ENCODE measurements at regions of chr3 and their contacts with region 1.

Region 1: DNA sequence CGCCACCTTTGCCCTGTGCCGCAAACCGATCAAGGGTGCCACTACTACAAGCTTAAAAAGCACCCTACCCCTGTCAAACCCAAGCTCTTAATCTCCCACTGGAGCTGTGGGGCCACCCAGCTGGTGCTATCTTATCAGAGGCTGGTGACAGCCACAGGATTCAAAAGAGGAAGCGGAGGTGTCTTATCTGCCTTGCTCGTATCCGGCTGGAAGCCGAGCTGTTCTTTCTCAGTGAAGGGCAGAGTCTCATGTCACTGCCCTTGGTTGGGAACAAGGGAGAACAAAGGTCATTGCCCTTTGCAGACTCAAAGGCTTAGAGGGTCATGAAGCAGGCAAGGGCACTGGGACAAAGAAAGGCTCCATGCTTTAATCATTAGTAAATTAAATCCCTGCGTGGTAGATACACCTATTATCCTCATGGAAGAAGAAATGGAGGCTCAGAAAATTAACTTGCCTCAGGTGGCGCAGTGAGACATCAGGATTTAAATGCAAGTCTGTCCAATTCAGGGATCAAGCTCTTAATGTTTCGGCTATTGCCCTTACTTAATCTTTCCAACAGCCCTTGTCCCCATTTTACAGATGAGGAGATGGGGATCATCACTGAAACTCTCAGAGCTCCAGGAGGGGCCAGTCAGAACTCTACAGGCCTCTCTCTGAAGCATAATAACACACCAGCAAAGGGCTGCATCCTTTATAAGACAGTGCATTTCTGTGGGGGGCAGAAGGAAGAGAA is 360.0 kb upstream of the PROK2 start:
- DNase-seq: no peak
- H3K4me3 ChIP-seq: no peak overlapping the region
- H3K27ac ChIP-seq: no peak overlapping the region
- H3K4me1 ChIP-seq: peaks cover 0 to under 1% (median 0%) of the 10 kb centered on the region in 4 donors
- H3K27me3 ChIP-seq: no peaks in the 10 kb centered on the region
- CTCF ChIP-seq: no peak
- EP300 ChIP-seq: no peak
- POLR2A ChIP-seq: no peak

Region 2: DNA sequence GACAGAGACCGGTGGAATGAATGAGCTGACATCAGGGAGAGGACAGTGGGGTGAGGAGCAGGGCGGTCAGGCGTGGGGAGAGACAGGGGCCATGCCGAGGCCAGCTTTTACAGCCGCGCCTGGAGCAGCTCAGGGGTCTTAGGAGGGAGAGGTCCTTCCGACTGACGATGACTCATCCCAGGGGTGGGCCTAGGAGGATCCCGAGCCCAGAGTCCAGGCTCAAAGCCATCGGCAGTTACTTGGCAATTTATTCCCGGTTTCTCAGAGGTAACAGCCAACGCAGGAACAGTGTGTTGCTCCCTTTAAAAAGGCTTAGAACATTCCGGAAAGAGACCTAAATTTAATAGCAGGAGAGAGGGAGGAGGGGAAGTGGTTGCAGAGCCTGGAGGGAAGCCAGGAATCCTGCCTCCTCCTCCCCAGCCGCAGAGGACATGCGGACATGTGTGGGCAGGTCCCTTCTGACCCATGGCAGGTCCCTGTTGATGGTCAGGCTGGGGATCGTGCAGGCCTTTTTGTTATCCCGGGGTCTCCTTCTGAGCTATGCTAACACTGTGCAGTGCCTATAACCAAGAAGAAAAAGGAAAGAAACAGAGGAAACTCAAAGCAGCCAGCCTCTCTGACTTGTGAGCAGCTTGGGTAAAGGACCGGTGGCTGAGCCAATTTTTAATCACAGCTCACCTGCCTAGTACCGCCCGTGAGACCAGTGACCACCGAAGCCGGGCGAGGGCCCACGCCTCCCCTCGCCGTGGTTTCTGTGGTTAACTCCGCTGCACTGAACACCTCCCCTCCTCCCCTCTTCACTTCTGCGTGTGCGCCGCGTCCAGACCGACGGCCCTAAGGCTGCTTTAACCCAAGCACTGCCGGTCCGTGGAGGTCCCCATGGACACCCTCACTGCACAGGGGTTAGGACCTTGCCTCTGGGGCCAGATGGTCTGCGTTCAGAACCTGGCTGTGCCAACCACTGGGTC is 32.4 kb after region 1 on chr3:
- in situ Hi-C with region 1: no loop called
- intact Hi-C with region 1: loop called (anchors 1 kb)
- DNase-seq: peak; percentile 41
- H3K4me3 ChIP-seq: peak overlapping the region in 1 of 4 donors; percentile 14
- H3K27ac ChIP-seq: peak overlapping the region; percentile 22 to 34 (median 30)
- H3K4me1 ChIP-seq: peaks cover under 1 to 26% (median 8%) of the 10 kb centered on the region in 4 donors
- H3K27me3 ChIP-seq: no peaks in the 10 kb centered on the region
- CTCF ChIP-seq: no peak
- EP300 ChIP-seq: no peak
- POLR2A ChIP-seq: no peak

Region 3: GRCh38 chr3:72189339-72189738 is 44.4 kb after region 1 on chr3:
- in situ Hi-C with region 1: no loop called
- intact Hi-C with region 1: no loop called
- DNase-seq: no peak
- H3K4me3 ChIP-seq: no peak overlapping the region
- H3K27ac ChIP-seq: no peak overlapping the region
- H3K4me1 ChIP-seq: no peaks in the 10 kb centered on the region
- H3K27me3 ChIP-seq: no peaks in the 10 kb centered on the region
- CTCF ChIP-seq: no peak
- EP300 ChIP-seq: no peak
- POLR2A ChIP-seq: no peak

Measured in transverse colon (tissue), 4 donors.